Activated CD4-positive, alpha-beta T cell treated with anti-CD3 and anti-CD28 coated beads for 36 hours (primary cell): ENCODE measurements at regions of chr10 and their contacts with region 1.

Region 1: GRCh38 chr10:33365871-33366411 is 31.5 kb upstream of the NRP1 start:
- DNase-seq: peak; percentile 56
- ATAC-seq: peak; percentile 95
- H3K4me3 Mint-ChIP-seq: no peak overlapping the region
- H3K27ac Mint-ChIP-seq: no peak overlapping the region
- H3K4me1 Mint-ChIP-seq: peaks cover 17% of the 10 kb centered on the region
- H3K27me3 Mint-ChIP-seq: peaks cover 33% of the 10 kb centered on the region

Region 2: GRCh38 chr10:33248638-33249037 is 117.3 kb before region 1 on chr10:
- CTCF ChIA-PET with region 1: no interaction called
- POLR2A ChIA-PET with region 1: no interaction called
- intact Hi-C with region 1: loop called (anchors 2 kb)
- DNase-seq: peak; percentile 30
- ATAC-seq: peak; percentile 83
- H3K4me3 Mint-ChIP-seq: no peak overlapping the region
- H3K27ac Mint-ChIP-seq: peak overlapping the region; percentile 39
- H3K4me1 Mint-ChIP-seq: peaks cover 71% of the 10 kb centered on the region
- H3K27me3 Mint-ChIP-seq: peaks cover 12% of the 10 kb centered on the region

Region 3: DNA sequence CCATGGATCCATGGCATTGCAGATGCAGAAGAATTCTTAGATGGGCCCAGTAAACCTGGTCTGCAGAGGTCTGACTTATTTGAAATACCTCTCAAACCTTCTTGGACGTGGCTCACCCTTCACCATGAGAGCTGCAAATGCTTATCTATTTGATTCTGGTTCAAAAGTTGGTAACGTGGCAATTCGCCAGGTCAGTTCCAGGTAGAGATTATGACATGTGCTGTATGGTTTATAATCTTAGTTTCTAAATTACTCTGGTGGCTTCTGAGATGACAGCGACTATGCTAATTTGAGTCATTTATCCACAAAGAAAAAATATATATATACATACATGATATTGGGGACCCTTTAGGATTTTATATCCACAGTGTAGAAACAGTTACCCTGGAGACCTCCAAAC is 100.3 kb before region 1 on chr10:
- CTCF ChIA-PET with region 1: interaction called, 3 read pairs
- POLR2A ChIA-PET with region 1: no interaction called
- intact Hi-C with region 1: loop called in 1 of 2 experiments (anchors 1 kb)
- DNase-seq: peak; percentile 84
- ATAC-seq: peak; percentile 47
- H3K4me3 Mint-ChIP-seq: no peak overlapping the region
- H3K27ac Mint-ChIP-seq: no peak overlapping the region
- H3K4me1 Mint-ChIP-seq: peaks cover 22% of the 10 kb centered on the region
- H3K27me3 Mint-ChIP-seq: peaks cover 29% of the 10 kb centered on the region

Region 4: DNA sequence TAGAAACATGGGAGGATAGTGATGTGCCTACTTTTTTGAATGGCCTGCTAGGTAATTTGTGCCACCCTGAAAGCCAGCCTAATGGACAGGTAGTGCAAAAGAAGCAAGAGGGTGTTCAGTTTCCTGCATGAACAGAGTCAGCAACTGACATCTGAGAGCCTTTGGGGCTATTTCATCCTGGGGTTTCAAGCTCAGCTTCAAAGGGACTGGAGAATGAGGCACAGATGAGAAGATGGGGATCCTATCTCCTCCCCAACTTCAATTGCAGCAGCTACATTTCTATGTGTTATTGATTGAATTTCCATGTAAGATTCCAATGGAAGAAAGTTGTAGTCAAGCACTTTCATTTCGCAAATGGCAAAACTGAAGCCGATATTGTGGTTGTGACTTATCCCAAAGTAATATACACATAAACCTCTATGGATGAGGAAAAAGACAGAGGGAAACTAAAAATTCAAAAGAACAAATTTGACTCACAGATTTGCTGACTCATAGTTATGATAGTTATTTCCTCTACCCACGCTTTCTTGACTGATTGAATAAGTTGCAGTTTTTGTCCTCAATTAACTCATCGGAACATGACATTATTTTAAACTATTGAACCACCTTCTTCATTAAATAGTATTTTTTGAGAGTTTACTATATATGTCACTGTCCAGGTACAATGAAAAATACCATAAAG is 11.2 kb after region 1 on chr10:
- CTCF ChIA-PET with region 1: interaction called, 7 read pairs
- POLR2A ChIA-PET with region 1: no interaction called
- intact Hi-C with region 1: loop called (anchors 1 kb)
- DNase-seq: no peak
- ATAC-seq: peak; percentile 68
- H3K4me3 Mint-ChIP-seq: no peak overlapping the region
- H3K27ac Mint-ChIP-seq: no peak overlapping the region
- H3K4me1 Mint-ChIP-seq: peaks cover 26% of the 10 kb centered on the region
- H3K27me3 Mint-ChIP-seq: peaks cover 20% of the 10 kb centered on the region

Region 5: DNA sequence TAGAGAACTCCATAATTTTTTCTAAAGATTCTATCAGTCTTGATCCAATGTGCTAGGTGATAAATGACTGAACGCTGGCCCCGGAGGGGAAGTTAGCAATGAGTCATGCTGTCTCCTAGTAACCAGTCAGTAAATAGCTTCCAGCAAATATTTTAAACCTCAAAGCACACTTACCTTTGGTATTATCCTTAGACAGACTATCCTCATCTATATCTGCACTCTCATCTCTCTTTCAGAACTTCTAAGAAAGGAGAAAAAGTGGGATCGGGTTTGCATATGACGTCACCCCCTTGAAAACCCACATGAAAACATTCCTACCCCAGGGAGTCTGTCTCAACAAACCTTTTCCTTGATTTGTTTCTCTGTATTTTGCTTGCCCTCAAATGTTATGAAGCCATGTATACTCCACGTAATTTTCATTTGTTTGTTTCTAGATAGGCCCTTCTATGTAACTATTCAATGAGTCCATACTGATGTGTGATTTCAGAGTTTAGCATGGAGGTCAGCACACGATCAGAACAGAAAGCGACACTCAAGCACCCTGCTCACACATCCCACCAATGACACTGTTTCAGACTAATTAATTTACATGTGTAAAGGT is 143.4 kb after region 1 on chr10:
- CTCF ChIA-PET with region 1: no interaction called
- POLR2A ChIA-PET with region 1: no interaction called
- intact Hi-C with region 1: loop called in 1 of 2 experiments (anchors 2 kb)
- DNase-seq: peak; percentile 64
- ATAC-seq: peak; percentile 85
- H3K4me3 Mint-ChIP-seq: no peak overlapping the region
- H3K27ac Mint-ChIP-seq: peak overlapping the region; percentile 32
- H3K4me1 Mint-ChIP-seq: peaks cover 8% of the 10 kb centered on the region
- H3K27me3 Mint-ChIP-seq: peaks cover 20% of the 10 kb centered on the region

Region 6: GRCh38 chr10:33559105-33559504 is 193.2 kb after region 1 on chr10:
- CTCF ChIA-PET with region 1: no interaction called
- POLR2A ChIA-PET with region 1: no interaction called
- intact Hi-C with region 1: no loop called
- DNase-seq: no peak
- ATAC-seq: no peak
- H3K4me3 Mint-ChIP-seq: no peak overlapping the region
- H3K27ac Mint-ChIP-seq: no peak overlapping the region
- H3K4me1 Mint-ChIP-seq: peaks cover 9% of the 10 kb centered on the region
- H3K27me3 Mint-ChIP-seq: peaks cover 32% of the 10 kb centered on the region

Region 7: GRCh38 chr10:34280599-34281374 is 914.8 kb after region 1 on chr10:
- CTCF ChIA-PET with region 1: no interaction called
- POLR2A ChIA-PET with region 1: no interaction called
- intact Hi-C with region 1: loop called in 1 of 2 experiments (anchors 5 kb)
- DNase-seq: peak; percentile 28
- ATAC-seq: peak; percentile 80
- H3K4me3 Mint-ChIP-seq: no peak overlapping the region
- H3K27ac Mint-ChIP-seq: peak overlapping the region; percentile 72
- H3K4me1 Mint-ChIP-seq: peaks cover 25% of the 10 kb centered on the region
- H3K27me3 Mint-ChIP-seq: peaks cover 5% of the 10 kb centered on the region